ENCODE measurements at regions of chr2 and their contacts with region 1.

Region 1: GRCh38 chr2:161017780-161018470 is 142.3 kb upstream of the TANK start:
- DNase-seq: no peak
- H3K4me3 ChIP-seq: no peak overlapping the region
- H3K27ac ChIP-seq: no peak overlapping the region
- H3K4me1 ChIP-seq: no peaks in the 10 kb centered on the region
- H3K27me3 ChIP-seq: no peaks in the 10 kb centered on the region
- CTCF ChIP-seq: no peak
- POLR2A ChIP-seq: no peak

Region 2: GRCh38 chr2:161004379-161004778 is 13.5 kb before region 1 on chr2:
- CTCF ChIA-PET with region 1: interaction called, 11 read pairs
- POLR2A ChIA-PET with region 1: no interaction called
- dilution Hi-C with region 1: no loop called
- intact Hi-C with region 1: no loop called
- DNase-seq: peak; percentile 22
- H3K4me3 ChIP-seq: no peak overlapping the region
- H3K27ac ChIP-seq: no peak overlapping the region
- H3K4me1 ChIP-seq: no peaks in the 10 kb centered on the region
- H3K27me3 ChIP-seq: no peaks in the 10 kb centered on the region
- CTCF ChIP-seq: peak; percentile 21 to 31
- POLR2A ChIP-seq: no peak

Measured in endothelial cell of umbilical vein (primary cell).